Gastrocnemius medialis (tissue), 4 donors: ENCODE measurements at regions of chr11 and their contacts with region 1.

Region 1: GRCh38 chr11:14974515-14975251 is 2.5 kb upstream of the CALCA start:
- DNase-seq: peak in 1 of 2 donors; percentile 26
- ATAC-seq: peak in 1 of 2 donors; percentile 80
- H3K4me3 ChIP-seq: peak overlapping the region; percentile 18 to 57 (median 30)
- H3K27ac ChIP-seq: no peak overlapping the region
- H3K4me1 ChIP-seq: peaks cover 14 to 32% of the 10 kb centered on the region in 2 donors
- H3K27me3 ChIP-seq: peaks cover 71 to 76% (median 73%) of the 10 kb centered on the region in 3 donors
- CTCF ChIP-seq: peak in 4 of 5 experiments; percentile 28 to 59 (median 40)
- POLR2A ChIP-seq: no peak

Region 2: GRCh38 chr11:14713496-14714244 is 261.0 kb before region 1 on chr11:
- in situ Hi-C with region 1: no loop called
- intact Hi-C with region 1: no loop called
- DNase-seq: no peak
- ATAC-seq: no peak
- H3K4me3 ChIP-seq: no peak overlapping the region
- H3K27ac ChIP-seq: no peak overlapping the region
- H3K4me1 ChIP-seq: no peaks in the 10 kb centered on the region
- H3K27me3 ChIP-seq: no peaks in the 10 kb centered on the region
- CTCF ChIP-seq: no peak
- POLR2A ChIP-seq: no peak

Region 3: DNA sequence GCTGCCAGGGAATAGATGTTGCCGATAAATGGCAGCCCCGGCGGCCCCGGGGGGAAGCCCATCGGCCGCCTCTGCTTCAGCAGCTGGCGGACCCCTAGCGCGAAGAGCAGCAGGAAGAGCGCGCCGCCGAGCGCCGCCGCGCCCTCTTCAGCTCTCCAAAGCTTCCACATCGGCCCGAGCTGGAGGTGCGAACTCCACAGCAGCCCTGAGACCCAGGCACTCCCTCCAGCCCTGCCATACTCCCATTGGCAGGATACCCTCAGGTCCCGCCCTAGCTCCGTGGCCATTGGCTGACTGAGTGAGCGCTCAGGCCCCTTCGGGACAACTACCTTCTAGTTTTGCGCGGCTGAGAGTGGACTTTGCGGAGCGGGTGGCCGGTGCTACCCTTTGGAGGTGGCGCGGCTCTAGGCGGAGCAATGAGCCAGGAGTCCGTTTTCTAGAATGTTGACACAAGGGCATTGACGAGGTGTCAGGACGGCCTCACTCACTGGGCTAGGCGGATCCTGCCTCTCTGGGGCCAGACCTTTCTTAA is 82.6 kb before region 1 on chr11 and contains the start of gene CYP2R1:
- in situ Hi-C with region 1: no loop called
- intact Hi-C with region 1: no loop called
- DNase-seq: peak; percentile 92 to 96
- ATAC-seq: peak; percentile 95 to 96
- H3K4me3 ChIP-seq: peak within 1 kb of the TSS; percentile 75 to 97 (median 87)
- H3K27ac ChIP-seq: peak within 1 kb of the TSS; percentile 87 to 94 (median 89)
- H3K4me1 ChIP-seq: peaks cover 9 to 21% of the 10 kb centered on the region in 2 donors
- H3K27me3 ChIP-seq: no peaks in the 10 kb centered on the region
- CTCF ChIP-seq: no peak
- POLR2A ChIP-seq: peak in 1 of 2 donors; percentile 20
- total RNA-seq, gene CYP2R1: 4.6 to 9.2 (median 4.8) TPM

Region 4: DNA sequence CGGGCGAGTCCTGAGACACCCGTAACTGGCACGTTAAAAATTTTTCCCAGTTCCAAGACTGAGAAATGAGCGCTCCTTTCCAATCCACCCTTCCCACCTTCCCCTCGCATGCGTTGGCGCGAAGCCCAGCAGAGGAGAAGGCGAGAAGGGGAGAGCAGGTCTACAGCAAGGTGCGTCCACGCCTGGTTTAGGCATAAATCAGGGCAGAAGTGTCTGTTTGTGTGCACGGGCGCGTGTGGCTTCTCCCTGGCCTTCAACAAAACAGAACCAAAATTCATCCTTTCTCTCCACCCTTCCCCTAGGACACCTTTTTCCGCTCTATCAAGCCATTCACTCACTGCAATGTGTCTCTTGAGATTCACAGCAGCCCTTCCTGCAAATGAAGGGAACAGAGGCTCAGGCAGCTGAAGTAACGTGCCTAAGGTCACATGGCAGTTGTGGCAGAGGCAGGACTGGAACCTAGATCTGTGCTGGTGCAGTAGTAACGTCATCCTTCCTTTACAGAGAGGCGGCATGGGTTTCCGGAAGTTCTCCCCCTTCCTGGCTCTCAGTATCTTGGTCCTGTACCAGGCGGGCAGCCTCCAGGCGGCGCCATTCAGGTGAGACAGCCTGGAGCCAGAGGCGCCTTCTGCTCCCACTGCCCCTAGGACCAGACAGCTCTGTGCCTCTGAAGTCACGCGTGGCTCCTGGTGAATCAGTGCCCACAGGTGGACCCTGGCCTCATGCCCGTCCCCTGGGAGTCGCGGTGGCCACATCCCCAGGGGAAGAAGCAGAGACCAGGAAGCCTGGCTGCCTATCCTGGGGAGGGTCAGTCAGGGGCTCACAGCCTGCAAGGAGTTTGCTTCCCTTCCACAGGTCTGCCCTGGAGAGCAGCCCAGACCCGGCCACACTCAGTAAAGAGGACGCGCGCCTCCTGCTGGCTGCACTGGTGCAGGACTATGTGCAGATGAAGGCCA is 99.8 kb after region 1 on chr11:
- in situ Hi-C with region 1: no loop called
- intact Hi-C with region 1: loop called (anchors 2 kb)
- DNase-seq: peak; percentile 26 to 58
- ATAC-seq: peak in 1 of 2 donors; percentile 75
- H3K4me3 ChIP-seq: peak overlapping the region in 2 of 4 donors; percentile 18 to 34
- H3K27ac ChIP-seq: no peak overlapping the region
- H3K4me1 ChIP-seq: peaks cover 4 to 18% of the 10 kb centered on the region in 2 donors
- H3K27me3 ChIP-seq: peaks cover 28 to 38% (median 31%) of the 10 kb centered on the region in 3 donors
- CTCF ChIP-seq: peak in 4 of 5 experiments; percentile 47 to 76 (median 64)
- POLR2A ChIP-seq: no peak